Sigmoid colon (tissue), 7 donors: ENCODE measurements at regions of chr3 and their contacts with region 1.

Region 1: GRCh38 chr3:11385891-11386290 is 113.7 kb downstream of the ATG7 start:
- DNase-seq: no peak
- H3K4me3 ChIP-seq: no peak overlapping the region
- H3K27ac ChIP-seq: peak overlapping the region in 2 of 4 donors; percentile 68 to 72
- H3K4me1 ChIP-seq: peaks cover 0 to 41% (median 26%) of the 10 kb centered on the region in 4 donors
- H3K27me3 ChIP-seq: no peaks in the 10 kb centered on the region
- CTCF ChIP-seq: no peak
- EP300 ChIP-seq: no peak
- POLR2A ChIP-seq: no peak

Region 2: GRCh38 chr3:11523572-11524101 is 137.7 kb after region 1 on chr3:
- intact Hi-C with region 1: loop called (anchors 10 kb)
- DNase-seq: peak; percentile 78
- H3K4me3 ChIP-seq: no peak overlapping the region
- H3K27ac ChIP-seq: peak overlapping the region; percentile 42 to 68 (median 58)
- H3K4me1 ChIP-seq: peaks cover 0 to 18% (median 16%) of the 10 kb centered on the region in 4 donors
- H3K27me3 ChIP-seq: no peaks in the 10 kb centered on the region
- CTCF ChIP-seq: no peak
- EP300 ChIP-seq: peak in 1 of 4 donors; percentile 26
- POLR2A ChIP-seq: no peak